Body of pancreas (tissue), 4 donors: ENCODE measurements at regions of chr22 and their contacts with region 1.

Region 1: DNA sequence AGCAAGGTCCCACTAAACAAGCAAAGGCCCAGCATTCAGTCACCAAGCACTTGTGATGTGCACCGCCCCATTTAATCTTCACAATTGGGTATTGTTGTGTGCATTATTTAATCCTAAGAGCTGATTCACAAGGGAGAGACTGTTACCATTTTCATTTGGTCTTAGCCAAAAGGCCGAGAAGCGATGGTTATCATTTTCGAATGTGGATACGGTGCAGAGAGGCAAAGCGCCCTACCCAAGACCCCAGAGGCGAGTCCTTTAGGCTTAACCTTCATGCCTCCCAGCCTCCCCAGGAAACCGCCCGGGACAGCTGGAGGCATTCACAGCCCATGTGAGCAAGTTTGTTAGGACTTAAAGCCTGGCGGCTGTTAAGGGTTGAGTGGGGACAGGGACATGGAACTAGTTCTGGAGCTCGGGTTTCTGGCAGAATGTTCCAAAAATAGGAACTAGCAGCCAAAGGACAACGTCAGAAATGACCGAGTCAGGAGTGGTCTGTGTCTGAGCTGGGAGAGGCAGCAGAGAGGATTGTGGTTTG is 13.0 kb upstream of the UPK3A start:
- DNase-seq: peak in 2 of 4 donors; percentile 44 to 66
- ATAC-seq: no peak
- H3K4me3 ChIP-seq: no peak overlapping the region
- H3K27ac ChIP-seq: no peak overlapping the region
- H3K4me1 ChIP-seq: peaks cover 14% of the 10 kb centered on the region
- H3K27me3 ChIP-seq: no peaks in the 10 kb centered on the region
- CTCF ChIP-seq: no peak
- POLR2A ChIP-seq: no peak

Region 2: GRCh38 chr22:45309472-45310227 is 37.9 kb after region 1 on chr22 and contains the start of gene FAM118A:
- intact Hi-C with region 1: no loop called
- DNase-seq: peak; percentile 92 to 96 (median 94)
- ATAC-seq: peak; percentile 94
- H3K4me3 ChIP-seq: peak within 1 kb of the TSS; percentile 59 to 93
- H3K27ac ChIP-seq: peak within 1 kb of the TSS; percentile 20 to 83 (median 72)
- H3K4me1 ChIP-seq: peaks cover 26% of the 10 kb centered on the region
- H3K27me3 ChIP-seq: no peaks in the 10 kb centered on the region
- CTCF ChIP-seq: peak in 3 of 7 experiments; percentile 0 to 23 (median 10)
- POLR2A ChIP-seq: peak; percentile 61 to 83 (median 75)
- total RNA-seq, gene FAM118A: 13.0 to 149 TPM

Region 3: GRCh38 chr22:45358127-45358526 is 86.4 kb after region 1 on chr22:
- intact Hi-C with region 1: no loop called
- DNase-seq: no peak
- ATAC-seq: no peak
- H3K4me3 ChIP-seq: no peak overlapping the region
- H3K27ac ChIP-seq: no peak overlapping the region
- H3K4me1 ChIP-seq: no peaks in the 10 kb centered on the region
- H3K27me3 ChIP-seq: no peaks in the 10 kb centered on the region
- CTCF ChIP-seq: no peak
- POLR2A ChIP-seq: no peak

Region 4: DNA sequence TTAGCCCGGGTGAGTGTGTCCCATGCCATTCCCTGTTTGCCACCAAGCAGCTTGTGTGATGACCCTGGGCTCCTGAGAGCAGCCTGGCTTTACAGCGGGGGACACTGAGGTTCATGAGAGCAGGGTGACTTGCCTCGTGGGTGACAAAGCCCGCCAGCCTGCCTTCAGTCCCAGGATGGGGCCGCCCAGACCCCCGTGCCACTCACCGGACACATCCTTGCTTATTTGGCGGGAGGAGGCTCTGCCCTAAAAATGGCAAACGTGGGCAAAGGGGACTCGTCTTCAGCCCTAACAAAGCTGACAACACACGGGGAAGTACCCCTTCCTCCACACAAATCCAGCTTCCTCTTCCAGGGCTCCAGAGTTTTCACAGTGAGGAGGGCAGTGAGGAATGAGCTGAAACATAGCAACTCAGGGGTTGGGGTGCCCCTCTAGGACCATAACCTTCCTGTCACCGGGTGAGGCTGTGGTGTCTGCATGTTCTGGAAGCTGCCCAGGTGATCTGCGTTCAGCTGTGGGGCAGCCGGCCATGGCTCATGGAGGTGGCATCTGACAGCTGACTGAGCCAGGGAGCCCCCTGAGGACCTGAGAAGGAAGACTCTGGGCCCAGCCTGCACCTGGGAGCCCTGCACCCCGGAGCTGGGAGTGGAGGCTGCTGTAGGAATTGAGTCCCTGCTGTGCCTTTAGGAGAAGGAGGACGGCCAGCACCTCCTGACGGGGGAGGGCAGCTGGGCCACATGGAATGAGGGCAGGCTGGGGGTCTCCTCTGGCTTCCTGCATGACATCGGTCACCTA is 158.4 kb after region 1 on chr22:
- intact Hi-C with region 1: loop called (anchors 5 kb)
- DNase-seq: no peak
- ATAC-seq: no peak
- H3K4me3 ChIP-seq: no peak overlapping the region
- H3K27ac ChIP-seq: no peak overlapping the region
- H3K4me1 ChIP-seq: peaks cover 1% of the 10 kb centered on the region
- H3K27me3 ChIP-seq: no peaks in the 10 kb centered on the region
- CTCF ChIP-seq: no peak
- POLR2A ChIP-seq: no peak

Region 5: GRCh38 chr22:45553351-45554039 is 281.8 kb after region 1 on chr22:
- intact Hi-C with region 1: loop called (anchors 10 kb)
- DNase-seq: peak; percentile 60 to 72 (median 66)
- ATAC-seq: peak; percentile 67
- H3K4me3 ChIP-seq: no peak overlapping the region
- H3K27ac ChIP-seq: peak overlapping the region; percentile 7 to 62 (median 37)
- H3K4me1 ChIP-seq: peaks cover 16% of the 10 kb centered on the region
- H3K27me3 ChIP-seq: no peaks in the 10 kb centered on the region
- CTCF ChIP-seq: peak; percentile 62 to 86 (median 73)
- POLR2A ChIP-seq: no peak